ENCODE measurements at regions of chr5 and their contacts with region 1.

Region 1: DNA sequence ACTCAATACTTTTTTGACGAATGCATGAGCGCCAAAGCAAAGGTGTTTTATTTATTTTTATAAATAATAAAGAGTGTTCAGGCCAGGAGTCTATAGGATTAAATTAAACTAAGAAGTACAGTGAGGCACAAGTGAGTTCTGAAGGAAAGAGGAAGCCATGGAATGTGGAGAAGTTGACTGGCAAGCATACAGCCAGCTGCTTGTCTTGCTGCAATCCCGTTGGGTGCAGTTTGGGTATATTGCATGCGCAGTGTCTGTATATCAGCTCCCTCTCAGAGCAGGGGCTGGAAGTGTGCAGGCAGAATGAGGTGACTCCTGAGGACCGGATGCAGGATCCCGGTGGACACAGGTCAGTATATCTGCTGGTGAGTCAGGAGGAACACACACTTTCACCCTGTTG is 315.6 kb downstream of the ZSWIM6 start:
- DNase-seq: no peak
- H3K4me3 ChIP-seq: no peak overlapping the region
- H3K27me3 ChIP-seq: peaks cover 9% of the 10 kb centered on the region
- CTCF ChIP-seq: no peak

Region 2: DNA sequence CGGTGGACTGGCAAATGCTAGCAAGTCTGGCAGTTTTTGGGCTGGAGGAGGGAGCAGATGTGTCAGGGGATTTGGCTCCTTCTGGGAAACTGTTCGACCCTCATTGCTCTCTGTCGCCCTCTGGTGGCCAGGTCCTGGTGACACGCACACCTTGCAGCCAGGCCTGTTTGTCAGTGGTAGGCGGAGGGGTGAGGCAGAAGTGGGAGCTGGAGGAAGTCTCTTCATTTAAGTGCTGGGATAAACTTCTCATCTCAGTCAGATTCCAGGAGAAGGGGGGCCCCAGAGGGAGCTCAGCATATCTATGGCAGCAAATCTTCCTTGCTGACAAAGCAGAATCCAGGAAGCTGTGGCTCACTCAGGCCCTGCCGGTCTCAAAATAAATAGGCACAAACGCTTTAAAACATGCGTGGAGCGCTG is 10.9 kb after region 1 on chr5:
- CTCF ChIA-PET with region 1: interaction called, 13 read pairs
- POLR2A ChIA-PET with region 1: no interaction called
- DNase-seq: peak; percentile 14
- H3K4me3 ChIP-seq: no peak overlapping the region
- H3K27me3 ChIP-seq: peaks cover 14% of the 10 kb centered on the region
- CTCF ChIP-seq: peak; percentile 96

Region 3: GRCh38 chr5:61910771-61911170 is 263.1 kb after region 1 on chr5:
- CTCF ChIA-PET with region 1: no interaction called
- POLR2A ChIA-PET with region 1: no interaction called
- DNase-seq: no peak
- H3K4me3 ChIP-seq: no peak overlapping the region
- H3K27me3 ChIP-seq: no peaks in the 10 kb centered on the region
- CTCF ChIP-seq: no peak